ENCODE measurements at regions of chr1 and their contacts with region 1.

Region 1: DNA sequence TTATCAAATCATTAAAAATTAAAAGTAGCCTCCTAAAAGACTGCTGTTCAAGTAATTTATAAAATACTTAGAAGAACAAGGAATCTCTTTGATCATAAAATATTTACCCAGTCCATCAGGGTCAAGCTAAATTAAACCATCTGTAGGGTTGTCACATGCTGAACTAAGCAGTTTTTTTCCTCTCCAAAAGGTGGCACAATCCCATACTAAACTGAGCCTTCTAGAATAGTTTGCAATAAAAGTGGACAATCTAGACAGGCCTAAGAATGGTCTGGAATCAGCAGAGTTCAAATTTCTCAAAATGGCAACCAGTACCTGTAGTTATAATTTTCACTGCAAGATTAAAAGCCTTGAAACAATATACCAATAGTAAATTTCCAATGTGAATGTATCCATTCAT is 194.8 kb downstream of the EIF4G3 start:
- DNase-seq: no peak
- ATAC-seq: peak in 1 of 2 donors; percentile 63

Region 2: DNA sequence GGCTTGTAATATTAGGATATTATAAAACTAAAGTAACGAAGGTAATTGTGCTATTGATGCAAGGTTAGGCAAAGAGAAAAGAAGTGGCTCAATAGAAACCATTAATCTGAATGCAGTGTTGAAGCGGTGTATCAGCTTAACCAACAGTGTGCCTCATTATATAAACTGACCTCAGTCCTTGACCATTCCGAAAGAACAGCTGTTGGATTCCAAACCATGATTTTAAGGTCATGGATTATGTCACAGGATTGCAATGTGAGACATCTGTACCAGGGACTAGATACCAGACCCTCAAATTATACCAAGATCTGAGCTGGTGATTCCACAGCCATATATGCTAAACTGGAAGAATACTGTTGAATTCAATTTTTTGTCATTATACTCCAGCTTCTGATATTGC is 60.6 kb before region 1 on chr1:
- intact Hi-C with region 1: no loop called
- DNase-seq: no peak
- ATAC-seq: no peak

Region 3: DNA sequence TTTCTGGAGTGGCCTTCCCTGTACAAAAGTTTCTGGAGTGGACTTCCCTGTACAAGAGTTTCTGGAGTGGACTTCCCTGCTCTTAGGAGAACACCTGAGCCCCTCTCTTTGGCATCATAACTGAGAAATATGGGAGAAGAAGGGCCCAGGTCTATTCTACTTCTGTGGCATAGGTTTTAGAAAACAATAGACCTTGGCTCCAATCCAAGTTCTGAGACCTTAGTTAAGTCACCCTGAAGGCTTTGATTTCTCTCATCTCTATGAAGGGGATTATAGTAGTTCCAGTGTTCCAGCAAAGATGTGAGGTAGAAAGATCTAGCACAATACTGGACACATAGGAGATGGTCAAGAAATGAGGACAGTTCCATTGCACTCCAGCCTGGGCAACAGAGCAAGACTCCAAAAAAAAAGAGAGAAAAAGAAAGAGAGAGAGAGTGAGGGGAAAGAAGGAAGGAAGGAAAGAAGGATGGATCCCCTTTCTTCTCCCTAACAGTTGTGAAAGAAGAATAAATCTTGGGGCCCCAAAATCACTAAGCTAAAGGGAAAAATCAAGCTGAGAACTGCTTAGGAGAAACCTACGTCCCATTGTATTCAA is 208.1 kb after region 1 on chr1:
- intact Hi-C with region 1: loop called (anchors 2 to 5 kb)
- DNase-seq: no peak
- ATAC-seq: no peak

Region 4: DNA sequence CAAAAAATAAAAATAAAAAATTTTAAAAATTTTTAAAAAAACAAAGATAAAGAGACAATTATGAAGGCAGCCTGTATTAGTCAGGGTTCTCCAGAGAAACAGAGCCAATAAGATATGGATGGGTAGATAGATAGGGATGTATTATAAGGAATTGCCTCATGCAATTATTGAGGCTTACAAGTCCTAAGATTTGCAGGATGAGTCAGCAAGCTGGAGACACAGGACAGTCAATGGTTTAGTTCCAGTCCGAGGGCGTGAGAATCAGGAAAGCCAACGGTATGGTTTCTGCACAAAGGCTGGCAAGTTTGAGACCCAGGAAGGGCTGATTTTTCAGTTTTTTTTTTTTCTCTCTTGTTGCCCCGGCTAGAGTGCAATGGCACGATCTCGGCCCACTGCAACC is 218.9 kb after region 1 on chr1:
- intact Hi-C with region 1: loop called in 1 of 2 experiments (anchors 2 kb)
- DNase-seq: no peak
- ATAC-seq: no peak